Right ventricle myocardium inferior (tissue), 1 donor: ENCODE measurements at regions of chr12 and their contacts with region 1.

Region 1: DNA sequence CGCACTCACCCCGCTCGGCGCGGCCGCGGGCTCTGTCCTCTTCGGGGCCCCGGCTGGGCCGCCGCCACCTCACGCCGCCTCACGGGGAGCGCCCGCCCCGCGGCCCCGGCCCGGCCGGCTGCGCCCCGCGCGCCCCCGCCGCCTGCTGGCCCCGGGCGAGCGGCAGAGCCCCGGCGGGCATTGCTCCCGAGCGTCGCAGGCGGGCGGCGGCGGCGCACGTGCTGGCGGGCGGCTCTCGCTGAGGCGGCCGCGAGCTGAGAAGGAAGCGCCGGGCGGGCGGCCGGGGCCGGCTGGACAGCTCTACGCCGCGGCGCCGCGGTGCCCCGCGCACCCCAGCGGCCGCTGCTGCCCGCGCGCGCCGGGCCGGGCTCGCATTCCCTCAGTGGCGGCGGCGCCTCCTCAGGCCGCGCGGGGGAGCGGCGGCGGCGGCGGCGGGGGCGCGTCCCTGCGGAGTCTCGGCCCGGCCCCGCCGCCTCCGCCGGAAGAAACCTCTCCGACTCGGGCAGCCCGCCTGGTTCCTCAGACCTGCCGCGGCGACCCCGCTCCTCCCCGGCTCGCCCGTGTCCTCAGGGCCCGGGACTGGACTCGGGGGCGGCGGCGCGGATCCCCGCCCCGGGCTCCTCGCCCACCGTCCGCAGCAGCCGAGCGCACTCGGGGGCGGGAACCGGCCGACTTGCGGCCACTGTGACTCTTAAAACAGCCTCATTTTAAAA is at the start of gene PITPNM2:
- DNase-seq: peak; percentile 86
- ATAC-seq: peak; percentile 89
- total RNA-seq, gene PITPNM2: 19.6 TPM

Region 2: GRCh38 chr12:122928404-122929147 is 222.3 kb before region 1 on chr12:
- intact Hi-C with region 1: no loop called
- DNase-seq: peak; percentile 14
- ATAC-seq: no peak

Region 3: GRCh38 chr12:122980183-122981046 is 170.5 kb before region 1 on chr12 and contains the start of gene ARL6IP4:
- intact Hi-C with region 1: loop called (anchors 5 kb)
- DNase-seq: peak; percentile 88
- ATAC-seq: peak; percentile 76
- total RNA-seq, gene ARL6IP4: 158 TPM

Region 4: GRCh38 chr12:123032736-123033391 is 118.0 kb before region 1 on chr12:
- intact Hi-C with region 1: no loop called
- DNase-seq: peak; percentile 54
- ATAC-seq: no peak

Region 5: DNA sequence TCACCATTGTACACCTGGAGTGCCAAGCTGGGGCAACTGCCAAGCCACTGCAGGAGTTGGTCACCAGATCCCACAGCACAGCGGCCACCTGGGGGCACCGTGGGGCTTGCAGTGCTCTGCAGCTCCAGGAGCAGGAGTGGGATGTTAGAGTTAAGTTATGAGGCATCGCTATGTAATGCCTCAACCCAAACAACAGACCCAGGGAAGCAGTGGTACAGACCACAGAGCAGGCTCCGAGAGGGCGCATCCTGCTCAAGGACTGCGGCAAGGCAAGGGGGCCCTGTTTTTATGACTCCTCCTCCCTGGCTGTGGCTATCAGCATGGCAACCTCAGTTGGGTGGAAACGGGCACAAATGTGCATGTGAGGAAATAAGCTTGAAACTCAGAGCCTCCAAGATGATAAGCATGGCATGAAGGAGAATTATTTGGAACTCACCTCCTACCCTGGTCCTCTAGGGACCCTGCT is 107.3 kb before region 1 on chr12:
- intact Hi-C with region 1: loop called (anchors 1 kb)
- DNase-seq: peak; percentile 90
- ATAC-seq: peak; percentile 94

Region 6: DNA sequence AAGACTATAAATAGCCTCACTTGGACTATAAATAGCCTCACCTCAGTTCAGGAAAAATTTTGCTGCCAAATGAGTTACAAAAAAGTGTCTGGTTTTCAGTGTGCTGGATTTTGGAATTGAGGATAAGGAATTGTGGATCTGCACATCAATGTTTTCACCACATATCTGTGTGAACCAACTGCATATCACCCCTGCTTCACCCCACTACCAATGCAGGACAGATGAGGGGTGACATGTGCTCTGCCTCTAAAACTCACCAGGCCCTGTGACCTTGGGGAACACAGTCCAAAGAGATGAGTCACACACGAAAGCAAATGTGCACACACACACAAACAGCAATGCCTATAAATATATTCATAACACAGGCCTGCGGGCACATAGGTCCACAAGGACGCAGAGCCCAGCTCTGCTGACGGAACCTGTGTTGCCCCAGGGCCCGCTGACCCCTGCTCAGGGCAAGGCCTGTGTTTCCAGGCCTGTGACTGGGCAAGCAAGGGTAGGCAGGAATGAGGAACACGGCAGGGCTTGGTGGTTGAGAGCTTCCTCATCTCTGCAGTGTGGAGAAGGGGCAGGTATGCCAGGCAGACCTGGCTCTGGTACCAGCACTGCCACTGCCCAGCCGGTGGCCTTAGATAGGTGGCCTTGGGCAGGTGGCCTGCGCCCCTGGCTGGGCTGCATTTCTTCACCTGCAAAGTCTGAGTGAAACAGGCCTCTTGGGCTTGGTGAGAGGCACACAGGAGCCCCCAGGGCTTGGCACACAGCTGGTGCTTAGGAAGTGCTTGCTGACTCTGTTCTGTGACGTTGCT is 88.0 kb before region 1 on chr12:
- intact Hi-C with region 1: loop called (anchors 5 kb)
- DNase-seq: peak; percentile 53
- ATAC-seq: peak; percentile 56

Region 7: DNA sequence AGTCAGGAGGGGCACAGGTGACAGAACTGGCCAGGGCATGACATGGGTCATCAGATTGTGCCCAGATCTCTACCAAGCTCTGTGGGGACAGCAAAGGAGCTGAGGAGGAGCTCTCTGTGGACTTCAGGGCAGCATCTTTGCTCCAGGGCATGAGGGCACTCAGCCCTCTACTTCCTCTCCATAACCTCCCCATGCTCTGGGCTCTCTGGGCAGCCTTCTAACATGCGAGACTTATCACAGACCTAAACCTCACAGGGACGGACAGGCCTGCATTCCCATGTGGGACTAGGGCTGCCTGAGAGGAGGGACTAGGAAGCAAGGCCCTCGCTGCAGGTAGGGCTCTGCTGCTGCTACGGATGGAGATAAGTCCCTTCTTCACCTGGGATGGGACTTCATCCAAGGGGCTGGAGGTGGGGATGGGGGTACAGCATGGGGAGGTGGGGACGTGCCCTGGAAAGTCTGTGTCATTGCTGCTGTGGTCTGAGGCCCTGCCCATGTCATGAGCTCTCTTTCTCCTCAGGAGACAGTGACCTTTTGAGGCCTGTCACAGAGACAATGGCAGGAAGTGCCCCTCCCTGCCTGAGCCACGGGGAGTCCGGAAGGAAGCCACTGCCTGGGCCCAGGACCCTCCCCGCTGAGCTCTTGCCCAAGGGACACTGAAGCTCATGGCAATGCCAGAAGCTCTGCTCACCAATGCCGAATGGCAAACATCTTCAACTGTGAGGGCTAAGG is 44.1 kb before region 1 on chr12:
- intact Hi-C with region 1: loop called (anchors 5 kb)
- DNase-seq: peak; percentile 75
- ATAC-seq: peak; percentile 39

Region 8: DNA sequence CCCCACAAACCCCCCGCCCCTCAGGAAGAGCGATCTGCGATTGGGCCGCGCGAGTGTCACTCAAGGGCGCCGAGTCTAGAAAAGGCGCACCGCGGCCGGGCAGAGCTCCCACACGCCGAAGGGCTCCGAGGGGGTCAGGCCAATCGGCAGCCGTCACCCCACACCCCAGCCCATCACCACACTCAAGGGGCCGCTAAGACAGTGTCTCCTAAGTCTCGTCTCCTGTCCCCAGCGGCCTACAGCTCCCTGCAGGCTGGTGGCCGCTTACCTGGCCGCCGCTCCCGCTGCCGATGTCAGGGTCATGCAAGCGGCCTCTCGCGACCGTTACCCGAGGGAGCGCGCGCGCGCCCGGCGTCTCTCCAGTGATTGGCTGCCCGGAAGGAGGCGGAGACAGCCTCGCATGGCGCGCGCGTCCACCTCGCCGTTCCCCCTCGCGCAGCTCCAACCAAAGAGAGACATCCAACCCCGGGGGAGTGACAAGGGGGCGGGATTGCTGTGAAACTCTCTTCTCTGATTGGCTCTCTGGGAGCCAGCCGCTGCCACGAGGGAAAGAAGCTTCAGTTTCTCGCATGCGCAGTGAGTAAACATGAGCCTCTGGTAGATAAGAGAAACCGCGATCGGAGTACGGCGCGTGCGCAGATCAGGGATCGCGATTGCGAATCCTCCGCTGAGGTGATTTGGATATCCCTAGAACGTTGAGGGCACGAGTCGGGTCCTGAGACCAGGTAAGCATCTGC is 82.1 kb after region 1 on chr12 and contains the starts of genes MPHOSPH9 and MTRFR:
- intact Hi-C with region 1: loop called (anchors 5 kb)
- DNase-seq: peak; percentile 99
- ATAC-seq: peak; percentile 99
- total RNA-seq, gene MPHOSPH9: 21.3 TPM
- total RNA-seq, gene MTRFR: 8.1 TPM

Region 9: DNA sequence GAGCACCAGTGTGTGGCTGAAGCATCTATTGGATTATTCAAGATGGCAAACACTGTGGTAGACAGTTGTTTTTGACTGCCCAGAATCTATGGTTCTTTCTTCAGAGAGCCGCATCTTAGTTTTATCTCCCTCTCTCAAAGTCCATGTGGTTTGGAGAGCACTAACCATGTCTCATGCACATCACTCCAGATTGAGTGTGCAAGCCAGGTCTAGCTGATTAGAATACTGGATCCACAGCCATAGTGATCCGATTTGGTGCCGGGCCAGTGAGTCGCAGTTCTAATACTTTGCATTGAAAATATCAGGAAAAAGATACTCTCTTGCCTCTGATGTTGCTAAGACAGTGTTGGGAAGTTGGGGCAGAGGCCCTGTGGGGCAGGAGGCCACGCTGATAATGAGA is 218.3 kb after region 1 on chr12:
- intact Hi-C with region 1: no loop called
- DNase-seq: no peak
- ATAC-seq: no peak